Psoas muscle (tissue), 8 donors: ENCODE measurements at regions of chr5 and their contacts with region 1.

Region 1: DNA sequence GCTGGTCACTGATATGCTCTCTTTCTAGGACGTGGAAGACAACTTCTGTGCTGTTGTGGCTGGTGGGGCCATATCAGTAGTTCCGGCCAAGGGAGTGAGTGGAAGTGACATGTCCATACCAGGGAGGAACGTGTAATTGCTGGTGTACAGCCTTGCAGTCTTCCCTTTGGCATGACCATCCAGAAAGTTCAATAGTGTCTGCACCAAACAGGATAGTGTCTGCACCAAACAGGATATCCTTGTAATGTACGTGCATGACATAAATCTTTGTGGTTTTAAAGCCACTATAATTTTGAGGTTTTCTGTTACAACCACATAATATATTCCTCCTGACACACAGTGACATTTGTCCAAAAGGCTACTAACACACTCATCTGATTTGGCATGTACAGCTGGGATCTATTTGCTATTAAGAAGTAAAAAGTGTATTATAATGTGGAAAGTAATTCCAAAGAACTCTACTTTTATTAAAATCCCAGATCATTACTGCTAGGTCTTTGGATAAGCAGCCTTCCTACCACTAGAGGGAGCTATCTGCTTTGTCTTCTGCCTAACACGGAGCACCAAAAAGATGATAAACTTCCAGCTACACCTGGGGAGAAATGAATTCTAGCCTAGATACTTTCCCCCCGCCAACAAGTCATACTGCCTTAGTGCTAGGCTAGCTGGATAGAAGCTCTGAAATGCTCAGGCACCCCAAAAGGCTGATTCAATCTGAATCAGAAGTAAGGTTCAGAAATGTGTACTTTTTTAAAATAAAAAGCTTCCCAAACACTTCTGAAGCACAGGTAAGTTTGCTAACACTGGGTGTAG is 52.7 kb downstream of the RNF145 start:
- DNase-seq: no peak
- ATAC-seq: peak; percentile 69 to 90 (median 76)
- H3K4me3 ChIP-seq: no peak overlapping the region
- H3K27ac ChIP-seq: no peak overlapping the region
- H3K4me1 ChIP-seq: no peaks in the 10 kb centered on the region
- H3K27me3 ChIP-seq: no peaks in the 10 kb centered on the region
- CTCF ChIP-seq: peak; percentile 89

Region 2: GRCh38 chr5:159133041-159133741 is 23.4 kb before region 1 on chr5:
- intact Hi-C with region 1: no loop called
- DNase-seq: no peak
- ATAC-seq: peak in 3 of 4 donors; percentile 42 to 52 (median 46)
- H3K4me3 ChIP-seq: no peak overlapping the region
- H3K27ac ChIP-seq: no peak overlapping the region
- H3K4me1 ChIP-seq: no peaks in the 10 kb centered on the region
- H3K27me3 ChIP-seq: peaks cover 0 to 2% (median 0%) of the 10 kb centered on the region in 3 donors
- CTCF ChIP-seq: peak; percentile 81

Region 3: DNA sequence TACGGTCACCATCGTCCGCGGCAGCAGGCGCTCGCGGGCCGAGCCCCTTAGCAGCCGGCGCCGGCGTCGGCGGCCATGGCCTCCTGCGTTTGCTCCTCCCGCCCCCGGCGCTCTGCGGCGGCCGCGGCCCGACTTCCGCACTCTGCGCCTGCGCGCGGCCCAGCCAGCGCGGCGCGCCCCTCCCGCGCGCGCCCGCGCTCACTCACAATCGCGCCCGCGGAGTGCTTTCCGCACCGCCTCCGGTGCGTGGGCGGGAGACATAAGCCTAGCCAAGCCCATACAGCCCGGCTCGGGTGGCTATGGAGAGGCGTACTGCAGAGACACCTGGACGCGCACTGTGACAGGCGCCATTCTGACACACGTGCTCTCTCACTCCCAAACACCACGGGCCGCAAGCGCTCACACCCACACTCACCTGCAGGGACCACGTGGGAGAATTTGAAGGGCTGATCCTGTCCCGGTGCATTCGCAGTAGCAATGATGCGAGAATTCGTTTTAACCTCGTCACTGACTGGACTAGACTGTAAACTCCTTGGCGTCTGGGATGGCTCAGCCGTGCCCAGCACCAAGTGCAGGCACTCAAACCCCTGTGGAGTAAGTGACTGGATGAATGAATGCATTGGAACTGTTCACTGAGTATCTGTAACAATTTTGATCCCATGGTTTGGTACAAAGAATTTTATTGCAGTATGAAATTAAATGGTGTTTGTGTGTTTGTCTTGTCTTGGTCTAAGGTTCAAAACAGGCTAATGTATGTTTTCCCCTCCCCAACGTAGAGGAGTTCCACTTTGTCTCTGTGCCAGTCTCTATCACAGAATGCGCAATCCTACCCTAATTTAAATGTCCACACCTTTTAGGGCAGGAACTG is 53.0 kb after region 1 on chr5 and contains the start of gene RNF145:
- intact Hi-C with region 1: loop called in 1 of 2 experiments (anchors 5 kb)
- DNase-seq: peak; percentile 90
- ATAC-seq: peak; percentile 85 to 87 (median 86)
- H3K4me3 ChIP-seq: peak within 1 kb of the TSS; percentile 86
- H3K27ac ChIP-seq: peak within 1 kb of the TSS; percentile 82
- H3K4me1 ChIP-seq: peaks cover 17% of the 10 kb centered on the region
- H3K27me3 ChIP-seq: no peaks in the 10 kb centered on the region
- CTCF ChIP-seq: no peak
- total RNA-seq, gene RNF145: 8.8 to 17.8 (median 13.8) TPM

Region 4: GRCh38 chr5:159262859-159263567 is 106.4 kb after region 1 on chr5 and contains the start of gene UBLCP1:
- intact Hi-C with region 1: loop called (anchors 5 to 10 kb)
- DNase-seq: peak; percentile 83 to 89
- ATAC-seq: peak; percentile 94 to 98 (median 96)
- H3K4me3 ChIP-seq: peak within 1 kb of the TSS; percentile 92
- H3K27ac ChIP-seq: peak within 1 kb of the TSS; percentile 93
- H3K4me1 ChIP-seq: peaks cover 16% of the 10 kb centered on the region
- H3K27me3 ChIP-seq: no peaks in the 10 kb centered on the region
- CTCF ChIP-seq: no peak
- total RNA-seq, gene UBLCP1: 8.3 to 16.4 (median 11.3) TPM

Region 5: DNA sequence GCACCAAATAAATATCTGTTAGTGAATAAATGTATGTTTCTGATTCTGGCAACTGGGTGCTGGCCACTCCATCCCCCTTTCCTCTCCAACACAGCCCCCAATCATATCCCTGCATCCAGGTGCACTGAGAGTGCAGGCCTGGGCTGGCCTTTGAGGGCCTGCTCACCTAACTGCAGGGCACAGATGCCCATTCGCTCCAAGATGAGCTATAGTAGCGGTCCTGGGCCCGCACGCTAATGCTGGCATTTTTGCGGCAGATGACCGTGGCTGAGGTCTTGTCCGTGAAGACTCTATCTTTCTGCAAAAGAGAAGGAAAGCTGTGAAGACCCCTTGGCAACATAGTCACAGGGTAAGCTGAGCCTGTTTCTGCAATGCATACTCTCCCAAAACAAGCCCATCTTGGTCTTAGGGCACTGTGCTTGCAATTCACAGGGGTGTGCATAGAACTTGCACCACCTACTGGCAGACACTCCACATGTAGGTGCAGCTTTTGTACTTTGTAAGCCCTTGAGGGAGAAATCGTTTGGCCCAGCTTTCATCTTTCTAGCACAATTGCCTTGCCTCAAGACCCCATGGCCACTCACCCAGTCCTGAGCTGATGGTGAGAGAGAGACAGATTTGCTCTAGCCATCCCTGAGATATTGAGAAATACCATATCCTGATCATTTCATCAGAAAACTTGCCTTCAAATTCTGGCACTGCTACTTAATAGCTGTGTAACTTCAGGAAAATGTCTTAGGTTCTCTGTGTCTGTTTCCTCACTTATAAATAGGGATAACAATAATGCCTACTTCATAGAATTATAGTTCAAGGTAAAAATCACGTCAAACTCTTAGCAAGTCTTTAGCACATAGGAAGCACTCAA is 160.1 kb after region 1 on chr5:
- intact Hi-C with region 1: loop called in 1 of 2 experiments (anchors 5 kb)
- DNase-seq: no peak
- ATAC-seq: no peak
- H3K4me3 ChIP-seq: no peak overlapping the region
- H3K27ac ChIP-seq: no peak overlapping the region
- H3K4me1 ChIP-seq: no peaks in the 10 kb centered on the region
- H3K27me3 ChIP-seq: peaks cover 0 to 3% (median 3%) of the 10 kb centered on the region in 3 donors
- CTCF ChIP-seq: peak; percentile 35

Region 6: GRCh38 chr5:159510282-159510681 is 353.6 kb after region 1 on chr5:
- intact Hi-C with region 1: loop called in 1 of 2 experiments (anchors 5 kb)
- DNase-seq: peak; percentile 64 to 73
- ATAC-seq: peak; percentile 80 to 92 (median 90)
- H3K4me3 ChIP-seq: no peak overlapping the region
- H3K27ac ChIP-seq: no peak overlapping the region
- H3K4me1 ChIP-seq: no peaks in the 10 kb centered on the region
- H3K27me3 ChIP-seq: no peaks in the 10 kb centered on the region
- CTCF ChIP-seq: no peak

Region 7: GRCh38 chr5:159987031-159987674 is 830.5 kb after region 1 on chr5:
- intact Hi-C with region 1: loop called (anchors 5 to 10 kb)
- DNase-seq: peak; percentile 73 to 86
- ATAC-seq: peak; percentile 93 to 98 (median 96)
- H3K4me3 ChIP-seq: peak overlapping the region; percentile 60
- H3K27ac ChIP-seq: no peak overlapping the region
- H3K4me1 ChIP-seq: no peaks in the 10 kb centered on the region
- H3K27me3 ChIP-seq: peaks cover 0 to 32% (median 8%) of the 10 kb centered on the region in 3 donors
- CTCF ChIP-seq: peak; percentile 70